ENCODE measurements at regions of chr15 and their contacts with region 1.

Region 1: DNA sequence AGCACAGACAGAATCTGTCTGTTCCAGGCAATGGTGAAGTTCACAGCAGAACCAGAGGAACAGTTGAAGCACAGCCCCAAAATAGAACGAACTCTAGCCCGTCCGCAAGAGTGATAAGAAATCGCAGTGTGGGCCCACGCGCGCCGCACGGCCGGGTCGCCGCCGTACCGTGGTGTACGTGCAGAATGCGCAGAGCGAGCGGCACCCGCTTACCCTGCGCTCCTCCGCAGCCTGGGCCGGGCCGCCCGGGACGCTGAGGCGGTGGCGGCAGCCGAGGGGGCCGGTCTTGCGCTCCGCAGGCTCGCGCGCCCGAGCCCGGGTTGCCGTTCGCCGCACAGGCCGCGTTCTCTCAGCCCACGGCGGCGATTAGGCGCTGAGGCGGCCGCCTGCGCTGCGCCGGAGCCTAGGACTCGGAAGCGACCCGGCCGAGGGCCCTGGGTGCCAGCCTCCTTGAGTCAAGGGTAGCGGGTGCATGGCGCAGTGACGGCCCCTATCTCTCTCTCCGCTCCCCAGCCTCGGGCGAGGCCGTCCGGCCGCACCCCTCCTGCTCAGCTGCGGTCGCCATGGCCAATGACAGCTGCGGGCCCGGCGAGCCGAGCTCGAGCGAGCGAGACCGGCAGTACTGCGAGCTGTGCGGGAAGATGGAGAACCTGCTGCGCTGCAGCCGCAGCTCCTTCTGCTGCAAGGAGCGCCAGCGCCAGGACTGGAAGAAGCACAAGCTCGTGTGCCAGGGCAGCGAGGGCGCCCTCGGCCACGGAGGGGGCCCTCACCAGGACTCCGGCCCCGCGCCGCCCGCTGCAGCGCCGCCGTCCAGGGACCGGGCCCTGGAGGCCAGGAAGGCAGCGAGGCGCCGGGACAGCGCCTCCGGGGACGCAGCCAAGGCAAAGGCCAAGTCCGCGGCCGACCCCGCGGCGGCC is 20.5 kb downstream of the WDR73 start:
- DNase-seq: peak; percentile 87
- ATAC-seq: peak; percentile 57
- H3K4me3 Mint-ChIP-seq: peak overlapping the region; percentile 93
- H3K27ac Mint-ChIP-seq: peak overlapping the region; percentile 99
- H3K4me1 Mint-ChIP-seq: peaks cover 45% of the 10 kb centered on the region
- H3K27me3 Mint-ChIP-seq: no peaks in the 10 kb centered on the region

Region 2: GRCh38 chr15:84570164-84570735 is 63.3 kb before region 1 on chr15:
- CTCF ChIA-PET with region 1: interaction called, 13 read pairs
- POLR2A ChIA-PET with region 1: no interaction called
- intact Hi-C with region 1: loop called in 1 of 2 experiments (anchors 2 kb)
- DNase-seq: peak; percentile 69
- ATAC-seq: peak; percentile 43
- H3K4me3 Mint-ChIP-seq: peak overlapping the region; percentile 73
- H3K27ac Mint-ChIP-seq: peak overlapping the region; percentile 77
- H3K4me1 Mint-ChIP-seq: peaks cover 20% of the 10 kb centered on the region
- H3K27me3 Mint-ChIP-seq: peaks cover 2% of the 10 kb centered on the region

Region 3: DNA sequence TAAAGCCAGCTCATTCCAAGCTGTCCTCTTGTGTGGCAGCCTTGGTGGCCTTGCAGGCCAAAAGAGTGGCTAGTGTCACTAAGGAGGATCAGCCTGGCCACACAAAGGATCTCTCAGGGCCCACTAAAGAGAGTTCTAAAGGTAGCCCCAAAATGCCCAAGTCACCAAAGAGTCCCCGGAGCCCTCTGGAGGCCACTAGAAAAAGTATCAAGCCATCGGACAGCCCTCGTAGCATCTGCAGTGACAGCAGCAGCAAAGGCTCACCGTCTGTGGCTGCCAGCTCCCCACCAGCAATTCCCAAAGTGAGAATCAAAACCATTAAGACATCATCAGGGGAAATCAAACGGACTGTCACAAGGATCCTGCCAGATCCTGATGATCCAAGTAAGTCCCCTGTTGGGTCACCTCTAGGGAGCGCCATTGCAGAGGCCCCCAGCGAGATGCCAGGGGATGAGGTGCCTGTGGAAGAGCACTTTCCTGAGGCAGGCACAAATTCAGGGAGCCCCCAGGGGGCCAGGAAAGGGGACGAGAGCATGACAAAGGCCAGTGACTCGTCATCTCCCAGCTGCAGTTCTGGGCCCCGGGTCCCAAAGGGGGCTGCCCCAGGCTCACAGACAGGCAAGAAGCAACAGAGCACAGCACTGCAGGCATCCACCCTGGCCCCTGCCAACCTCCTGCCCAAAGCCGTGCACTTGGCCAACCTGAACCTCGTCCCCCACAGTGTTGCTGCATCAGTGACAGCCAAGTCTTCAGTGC is 150.1 kb after region 1 on chr15:
- CTCF ChIA-PET with region 1: no interaction called
- POLR2A ChIA-PET with region 1: interaction called, 10 read pairs
- intact Hi-C with region 1: no loop called
- DNase-seq: peak; percentile 42
- ATAC-seq: peak; percentile 18
- H3K4me3 Mint-ChIP-seq: no peak overlapping the region
- H3K27ac Mint-ChIP-seq: peak overlapping the region; percentile 19
- H3K4me1 Mint-ChIP-seq: peaks cover 59% of the 10 kb centered on the region
- H3K27me3 Mint-ChIP-seq: no peaks in the 10 kb centered on the region